ENCODE measurements at regions of chr10 and their contacts with region 1.

Region 1: DNA sequence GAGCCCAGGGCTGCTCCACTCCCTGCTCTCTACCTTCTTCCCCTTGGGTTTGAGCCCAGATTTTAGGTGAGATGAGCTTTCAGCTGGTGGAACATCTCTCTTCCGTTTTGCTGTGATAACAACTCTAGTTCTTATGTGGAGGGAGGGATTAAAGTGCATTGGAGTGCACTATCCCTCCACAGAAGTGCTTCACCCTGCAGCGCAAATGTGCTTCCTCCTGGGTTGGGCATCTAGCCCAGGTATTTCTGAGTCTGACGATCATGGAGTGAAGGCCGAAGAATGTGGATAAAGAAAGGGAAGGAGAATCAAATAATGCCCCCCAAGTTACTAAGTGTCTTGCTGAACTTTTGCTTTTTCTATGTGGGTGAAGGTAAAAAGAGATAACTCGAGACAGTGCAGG is 157.4 kb downstream of the CACNB2 start:
- DNase-seq: no peak
- ATAC-seq: no peak
- H3K4me3 ChIP-seq: no peak overlapping the region
- H3K4me1 ChIP-seq: no peaks in the 10 kb centered on the region
- CTCF ChIP-seq: no peak

Region 2: GRCh38 chr10:18260310-18260922 is 37.2 kb before region 1 on chr10:
- intact Hi-C with region 1: loop called in 1 of 2 experiments (anchors 2 kb)
- DNase-seq: no peak
- ATAC-seq: no peak
- H3K4me3 ChIP-seq: no peak overlapping the region
- H3K4me1 ChIP-seq: no peaks in the 10 kb centered on the region
- CTCF ChIP-seq: no peak